Activated T-helper 2 cell treated with anti-CD3 and anti-CD28 coated beads, Interferon-gamma antibody, Interleukin-2, Interleukin-4, amounts not matched to agents 10 μg/mL and 5 μg/mL and 100 μg/mL, durations not matched to agents 14 hours and 24 hours and 36 hours (primary cell): ENCODE measurements at regions of chr11 and their contacts with region 1.

Region 1: GRCh38 chr11:95089620-95090542 is at the start of gene ENDOD1:
- DNase-seq: peak; percentile 85
- H3K4me3 Mint-ChIP-seq: peak within 1 kb of the TSS; percentile 88
- H3K27ac Mint-ChIP-seq: peak within 1 kb of the TSS; percentile 95
- H3K4me1 Mint-ChIP-seq: peaks cover 66% of the 10 kb centered on the region
- H3K27me3 Mint-ChIP-seq: no peaks in the 10 kb centered on the region
- total RNA-seq, gene ENDOD1: 33.7 and 34.9 TPM in 2 replicates

Region 2: GRCh38 chr11:94134651-94135512 is 955.0 kb before region 1 on chr11:
- intact Hi-C with region 1: loop called (anchors 10 kb)
- DNase-seq: no peak
- H3K4me3 Mint-ChIP-seq: no peak overlapping the region
- H3K27ac Mint-ChIP-seq: peak overlapping the region; percentile 67
- H3K4me1 Mint-ChIP-seq: peaks cover 36% of the 10 kb centered on the region
- H3K27me3 Mint-ChIP-seq: no peaks in the 10 kb centered on the region

Region 3: GRCh38 chr11:94973099-94973968 is 116.5 kb before region 1 on chr11 and contains the starts of genes CWC15 and KDM4D:
- intact Hi-C with region 1: loop called (anchors 5 kb)
- DNase-seq: peak; percentile 91
- H3K4me3 Mint-ChIP-seq: peak within 1 kb of the TSS; percentile 95
- H3K27ac Mint-ChIP-seq: peak within 1 kb of the TSS; percentile 91
- H3K4me1 Mint-ChIP-seq: peaks cover 28% of the 10 kb centered on the region
- H3K27me3 Mint-ChIP-seq: no peaks in the 10 kb centered on the region
- total RNA-seq, gene CWC15: 86.1 and 94.4 TPM in 2 replicates
- total RNA-seq, gene KDM4D: 0.48 and 0.84 TPM in 2 replicates

Region 4: DNA sequence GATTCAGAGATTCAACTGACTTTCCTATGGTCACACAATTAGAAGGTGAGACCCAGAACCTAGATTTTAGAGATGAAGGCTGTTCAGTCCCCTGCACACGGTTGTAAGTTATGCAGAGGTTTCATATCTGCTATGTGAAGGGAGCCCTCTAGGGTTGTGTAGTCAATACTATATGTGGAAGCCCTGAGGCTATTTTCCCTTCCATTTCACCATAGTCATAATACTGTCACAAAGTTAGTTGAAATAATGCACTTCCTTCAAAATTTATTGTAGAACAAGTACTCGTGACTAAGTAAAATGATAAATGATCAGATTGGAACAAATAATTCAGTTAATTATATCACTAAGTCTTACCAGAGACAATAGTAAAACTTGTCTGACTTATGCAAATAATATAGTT is 48.6 kb after region 1 on chr11:
- intact Hi-C with region 1: loop called (anchors 2 kb)
- DNase-seq: no peak
- H3K4me3 Mint-ChIP-seq: no peak overlapping the region
- H3K27ac Mint-ChIP-seq: no peak overlapping the region
- H3K4me1 Mint-ChIP-seq: peaks cover 24% of the 10 kb centered on the region
- H3K27me3 Mint-ChIP-seq: peaks cover 6% of the 10 kb centered on the region

Region 5: DNA sequence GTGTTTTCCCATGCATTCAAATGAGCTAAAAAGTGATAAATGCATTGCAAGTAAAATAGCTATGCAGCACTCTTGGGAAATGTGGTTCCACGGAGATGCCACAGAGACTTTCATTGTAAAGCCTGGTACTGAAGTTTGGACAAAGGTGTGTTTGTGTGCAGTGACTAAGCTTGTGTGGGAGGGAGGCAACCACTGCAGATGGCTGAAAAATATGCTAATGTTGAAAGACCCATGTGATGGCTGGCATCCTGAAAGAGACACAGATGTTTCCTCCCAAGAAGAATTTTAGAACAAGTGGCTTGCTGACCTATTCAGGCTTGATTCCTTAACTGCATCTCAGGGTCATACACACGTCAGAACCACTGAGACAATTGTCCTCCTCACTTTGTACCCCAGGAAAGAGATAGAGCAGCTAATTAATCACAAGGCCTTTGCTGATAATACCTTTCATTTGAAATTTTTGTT is 625.9 kb after region 1 on chr11:
- intact Hi-C with region 1: loop called (anchors 5 kb)
- DNase-seq: no peak
- H3K4me3 Mint-ChIP-seq: peak overlapping the region; percentile 19
- H3K27ac Mint-ChIP-seq: peak overlapping the region; percentile 82
- H3K4me1 Mint-ChIP-seq: peaks cover 60% of the 10 kb centered on the region
- H3K27me3 Mint-ChIP-seq: no peaks in the 10 kb centered on the region

Region 6: DNA sequence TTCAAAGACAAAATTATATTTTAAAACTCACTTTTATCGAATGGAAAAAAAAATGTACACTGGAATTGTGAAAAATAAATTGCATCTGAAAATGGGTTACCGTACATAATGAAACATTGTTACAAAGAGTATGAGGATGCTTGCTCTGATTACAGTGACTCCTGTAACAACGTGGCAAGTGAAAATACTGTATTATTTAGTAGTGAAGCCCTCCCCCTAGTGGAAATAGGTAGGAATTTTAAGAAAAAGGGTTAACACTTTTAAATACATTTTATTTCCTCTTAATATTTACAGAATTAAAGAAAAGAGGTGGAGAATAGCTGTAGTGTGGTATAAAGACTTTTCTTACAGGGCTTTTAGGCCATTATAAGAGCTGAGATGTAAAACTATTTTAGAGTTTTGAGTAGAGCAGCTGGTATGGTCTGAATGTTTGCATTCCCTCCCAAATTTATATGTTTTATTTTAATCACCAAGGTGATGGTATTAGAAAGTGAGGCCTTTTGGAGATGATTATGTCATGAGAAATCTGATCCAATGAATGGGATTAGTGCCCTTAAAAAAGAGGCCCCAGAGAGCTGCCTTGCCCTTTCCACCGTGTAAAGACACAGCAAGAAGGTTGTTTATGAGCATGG is 674.5 kb after region 1 on chr11:
- intact Hi-C with region 1: loop called (anchors 5 kb)
- DNase-seq: no peak
- H3K4me3 Mint-ChIP-seq: no peak overlapping the region
- H3K27ac Mint-ChIP-seq: no peak overlapping the region
- H3K4me1 Mint-ChIP-seq: peaks cover 15% of the 10 kb centered on the region
- H3K27me3 Mint-ChIP-seq: no peaks in the 10 kb centered on the region